Caco-2 (cell line): ENCODE measurements at regions of chr19 and their contacts with region 1.

Region 1: GRCh38 chr19:19113040-19113626 is 25.1 kb downstream of the TMEM161A start:
- DNase-seq: peak in 1 of 2 experiments; percentile 24
- H3K4me3 ChIP-seq: no peak overlapping the region
- H3K4me3 Mint-ChIP-seq: no peak overlapping the region
- H3K27ac Mint-ChIP-seq: no peak overlapping the region
- H3K4me1 ChIP-seq: no peaks in the 10 kb centered on the region
- H3K4me1 Mint-ChIP-seq: no peaks in the 10 kb centered on the region
- H3K27me3 ChIP-seq: no peaks in the 10 kb centered on the region
- H3K27me3 Mint-ChIP-seq: no peaks in the 10 kb centered on the region
- CTCF ChIP-seq: peak in 1 of 2 experiments; percentile 34

Region 2: GRCh38 chr19:18995804-18996241 is 117.3 kb before region 1 on chr19:
- CTCF ChIA-PET with region 1: no interaction called
- POLR2A ChIA-PET with region 1: no interaction called
- intact Hi-C with region 1: loop called (anchors 2 kb)
- DNase-seq: peak; percentile 72 to 74
- H3K4me3 ChIP-seq: no peak overlapping the region
- H3K4me3 Mint-ChIP-seq: no peak overlapping the region
- H3K27ac Mint-ChIP-seq: no peak overlapping the region
- H3K4me1 ChIP-seq: no peaks in the 10 kb centered on the region
- H3K4me1 Mint-ChIP-seq: no peaks in the 10 kb centered on the region
- H3K27me3 ChIP-seq: no peaks in the 10 kb centered on the region
- H3K27me3 Mint-ChIP-seq: no peaks in the 10 kb centered on the region
- CTCF ChIP-seq: peak; percentile 42 to 78

Region 3: GRCh38 chr19:19053508-19054314 is 59.4 kb before region 1 on chr19:
- CTCF ChIA-PET with region 1: no interaction called
- POLR2A ChIA-PET with region 1: no interaction called
- intact Hi-C with region 1: loop called (anchors 2 kb)
- DNase-seq: peak; percentile 51 to 69
- H3K4me3 ChIP-seq: no peak overlapping the region
- H3K4me3 Mint-ChIP-seq: no peak overlapping the region
- H3K27ac Mint-ChIP-seq: no peak overlapping the region
- H3K4me1 ChIP-seq: no peaks in the 10 kb centered on the region
- H3K4me1 Mint-ChIP-seq: no peaks in the 10 kb centered on the region
- H3K27me3 ChIP-seq: no peaks in the 10 kb centered on the region
- H3K27me3 Mint-ChIP-seq: no peaks in the 10 kb centered on the region
- CTCF ChIP-seq: peak; percentile 73 to 80